WTC11 (cell line): ENCODE measurements at regions of chr19 and their contacts with region 1.

Region 1: DNA sequence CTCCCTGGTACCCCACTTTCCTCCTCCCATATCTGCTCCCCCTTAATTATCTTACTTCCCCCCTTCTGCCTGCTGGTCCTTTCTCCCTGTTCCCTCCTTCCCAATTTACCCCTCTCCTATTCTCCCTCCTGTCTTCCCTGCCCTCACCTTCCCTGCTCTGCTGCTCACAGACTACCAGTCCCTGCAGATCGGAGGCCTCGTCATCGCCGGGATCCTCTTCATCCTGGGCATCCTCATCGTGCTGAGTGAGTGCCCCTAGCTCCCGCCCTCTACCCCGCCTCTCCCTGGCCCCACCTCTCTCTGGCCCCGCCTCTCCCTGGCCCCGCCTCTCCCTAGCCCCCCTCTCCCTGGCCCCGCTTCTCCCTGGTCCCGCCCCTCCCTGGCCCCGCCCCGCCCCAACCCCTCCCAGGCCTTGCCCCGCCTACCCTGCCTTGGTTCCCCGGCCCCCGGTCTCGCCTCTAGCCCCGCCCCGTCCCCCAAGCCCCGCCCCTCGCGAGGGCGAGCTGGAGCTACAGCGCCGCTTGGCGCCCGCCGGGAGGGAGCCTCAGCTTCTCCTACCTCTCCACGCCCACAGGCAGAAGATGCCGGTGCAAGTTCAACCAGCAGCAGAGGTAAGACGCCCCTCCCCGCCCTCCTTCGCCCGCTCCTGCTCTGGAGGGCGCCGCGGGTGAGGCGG is 2.0 kb upstream of the FXYD7 start:
- DNase-seq: peak; percentile 98
- ATAC-seq: peak; percentile 77
- H3K4me3 Mint-ChIP-seq: peak overlapping the region; percentile 91
- H3K27ac Mint-ChIP-seq: 0 out of 2 replicates have a peak overlapping the region, but pooled peaks have one; percentile 86
- H3K4me1 Mint-ChIP-seq: peaks cover 44% of the 10 kb centered on the region
- H3K27me3 Mint-ChIP-seq: peaks cover 34% of the 10 kb centered on the region
- CTCF ChIP-seq: no peak

Region 2: DNA sequence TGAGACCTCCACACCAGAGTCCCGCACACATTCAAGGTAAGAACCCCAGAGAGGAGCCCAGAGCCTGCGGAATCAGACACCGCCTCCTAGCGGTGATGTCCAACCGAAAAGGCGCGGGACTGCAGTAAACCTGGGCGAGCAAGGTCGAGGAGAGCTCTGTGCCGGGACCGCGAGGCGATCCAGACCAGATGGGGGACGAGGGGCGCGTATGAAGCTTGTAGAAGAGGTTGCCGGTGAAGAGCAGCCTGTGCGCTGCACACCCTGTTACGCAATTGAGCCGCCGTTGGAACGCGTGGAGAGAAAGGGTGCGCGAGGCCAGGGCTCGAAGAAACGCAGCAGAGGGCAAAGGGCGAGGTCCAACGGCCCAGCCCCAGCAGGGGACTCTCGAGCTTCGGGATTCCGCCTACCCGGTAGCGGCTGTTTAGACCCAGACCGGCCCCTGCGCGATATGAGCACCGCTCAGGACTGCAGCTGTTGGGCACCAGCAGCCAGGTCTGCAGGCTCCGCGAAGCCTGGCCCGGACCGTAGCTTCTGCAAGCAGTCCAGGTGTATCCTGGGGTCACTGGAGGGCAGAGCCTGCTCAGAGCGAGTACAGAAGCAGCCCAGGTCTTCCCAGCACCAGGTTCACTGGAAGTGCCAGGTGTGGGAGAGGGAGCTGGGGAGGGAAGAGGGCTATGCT is 302.2 kb before region 1 on chr19:
- CTCF ChIA-PET with region 1: interaction called, 13 read pairs
- POLR2A ChIA-PET with region 1: no interaction called
- DNase-seq: peak; percentile 89
- ATAC-seq: peak; percentile 87
- H3K4me3 Mint-ChIP-seq: peak overlapping the region; percentile 75
- H3K27ac Mint-ChIP-seq: no peak overlapping the region
- H3K4me1 Mint-ChIP-seq: peaks cover 19% of the 10 kb centered on the region
- H3K27me3 Mint-ChIP-seq: peaks cover 21% of the 10 kb centered on the region
- CTCF ChIP-seq: peak; percentile 67

Region 3: GRCh38 chr19:35055715-35056179 is 85.4 kb before region 1 on chr19:
- CTCF ChIA-PET with region 1: interaction called, 37 read pairs
- POLR2A ChIA-PET with region 1: interaction called, 3 read pairs
- DNase-seq: peak; percentile 83
- ATAC-seq: peak; percentile 96
- H3K4me3 Mint-ChIP-seq: peak overlapping the region; percentile 18
- H3K27ac Mint-ChIP-seq: peak overlapping the region; percentile 43; the same call in 1 of the 2 replicates
- H3K4me1 Mint-ChIP-seq: peaks cover 19% of the 10 kb centered on the region
- H3K27me3 Mint-ChIP-seq: no peaks in the 10 kb centered on the region; the same call in 1 of the 2 replicates
- CTCF ChIP-seq: peak; percentile 36

Region 4: GRCh38 chr19:35090506-35091237 is 50.4 kb before region 1 on chr19:
- CTCF ChIA-PET with region 1: interaction called, 22 read pairs
- POLR2A ChIA-PET with region 1: no interaction called
- DNase-seq: peak; percentile 72
- ATAC-seq: peak; percentile 87
- H3K4me3 Mint-ChIP-seq: peak overlapping the region; percentile 55
- H3K27ac Mint-ChIP-seq: no peak overlapping the region
- H3K4me1 Mint-ChIP-seq: peaks cover 15% of the 10 kb centered on the region
- H3K27me3 Mint-ChIP-seq: peaks cover 5% of the 10 kb centered on the region
- CTCF ChIP-seq: peak; percentile 74

Region 5: GRCh38 chr19:35114353-35115176 is 26.5 kb before region 1 on chr19:
- CTCF ChIA-PET with region 1: interaction called, 61 read pairs
- POLR2A ChIA-PET with region 1: interaction called, 3 read pairs
- DNase-seq: peak; percentile 92
- ATAC-seq: peak; percentile 82
- H3K4me3 Mint-ChIP-seq: peak overlapping the region; percentile 65
- H3K27ac Mint-ChIP-seq: no peak overlapping the region
- H3K4me1 Mint-ChIP-seq: peaks cover 46% of the 10 kb centered on the region
- H3K27me3 Mint-ChIP-seq: peaks cover 3% of the 10 kb centered on the region
- CTCF ChIP-seq: peak; percentile 99

Region 6: GRCh38 chr19:35154525-35155406 is 13.7 kb after region 1 on chr19 and contains the start of gene FXYD5:
- CTCF ChIA-PET with region 1: interaction called, 143 read pairs
- POLR2A ChIA-PET with region 1: interaction called, 15 read pairs
- DNase-seq: peak; percentile 64
- ATAC-seq: peak; percentile 45
- H3K4me3 Mint-ChIP-seq: peak within 1 kb of the TSS; percentile 97
- H3K27ac Mint-ChIP-seq: peak within 1 kb of the TSS; percentile 58
- H3K4me1 Mint-ChIP-seq: peaks cover 53% of the 10 kb centered on the region
- H3K27me3 Mint-ChIP-seq: no peaks in the 10 kb centered on the region; the same call in 1 of the 2 replicates
- CTCF ChIP-seq: no peak
- total RNA-seq, gene FXYD5: 114 to 135 TPM (median 128 TPM) in 3 replicates

Region 7: GRCh38 chr19:35224681-35225571 is 83.8 kb after region 1 on chr19:
- CTCF ChIA-PET with region 1: interaction called, 26 read pairs
- POLR2A ChIA-PET with region 1: no interaction called
- DNase-seq: peak; percentile 70
- ATAC-seq: peak; percentile 84
- H3K4me3 Mint-ChIP-seq: peak overlapping the region; percentile 40
- H3K27ac Mint-ChIP-seq: no peak overlapping the region
- H3K4me1 Mint-ChIP-seq: peaks cover 21% of the 10 kb centered on the region
- H3K27me3 Mint-ChIP-seq: peaks cover 8% of the 10 kb centered on the region
- CTCF ChIP-seq: peak; percentile 23; the same call in 1 of the 2 replicates

Region 8: DNA sequence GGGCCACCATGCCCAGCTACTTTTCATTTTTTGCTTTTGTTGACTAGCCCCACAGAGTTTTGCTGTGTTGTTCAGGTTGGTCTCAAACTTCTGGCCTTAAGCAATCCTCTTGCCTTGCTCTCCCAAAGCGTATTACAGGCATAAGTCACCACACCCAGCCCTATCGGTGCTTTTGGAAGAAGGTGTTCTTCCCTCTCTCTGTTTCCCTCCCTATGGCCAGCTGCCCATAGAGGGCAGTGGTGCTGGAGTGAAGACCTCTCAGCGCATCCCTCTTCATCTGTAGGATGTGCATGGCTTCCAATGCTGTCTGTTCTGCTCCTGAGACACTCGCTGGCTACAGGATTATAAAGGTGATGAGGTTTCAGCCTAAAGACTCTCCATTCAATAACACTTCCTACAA is 186.5 kb after region 1 on chr19:
- CTCF ChIA-PET with region 1: no interaction called
- POLR2A ChIA-PET with region 1: no interaction called
- DNase-seq: peak; percentile 43
- ATAC-seq: peak; percentile 86
- H3K4me3 Mint-ChIP-seq: no peak overlapping the region
- H3K27ac Mint-ChIP-seq: no peak overlapping the region
- H3K4me1 Mint-ChIP-seq: peaks cover 13% of the 10 kb centered on the region
- H3K27me3 Mint-ChIP-seq: no peaks in the 10 kb centered on the region; the same call in 1 of the 2 replicates
- CTCF ChIP-seq: no peak